CD14-positive monocyte (primary cell): ENCODE measurements at regions of chr11 and their contacts with region 1.

Region 1: GRCh38 chr11:122271137-122271536 is 155.1 kb upstream of the BLID start:
- DNase-seq: no peak
- H3K4me3 ChIP-seq: no peak overlapping the region
- H3K4me3 Mint-ChIP-seq: no peak overlapping the region
- H3K27ac ChIP-seq: no peak overlapping the region
- H3K27ac Mint-ChIP-seq: no peak overlapping the region
- H3K4me1 ChIP-seq: peaks cover 3 to 7% of the 10 kb centered on the region in 2 donors
- H3K4me1 Mint-ChIP-seq: peaks cover 17% of the 10 kb centered on the region
- H3K27me3 ChIP-seq: no peaks in the 10 kb centered on the region
- H3K27me3 Mint-ChIP-seq: peaks cover 0 to 2% (median 0%) of the 10 kb centered on the region in 3 donors
- CTCF ChIP-seq: no peak

Region 2: DNA sequence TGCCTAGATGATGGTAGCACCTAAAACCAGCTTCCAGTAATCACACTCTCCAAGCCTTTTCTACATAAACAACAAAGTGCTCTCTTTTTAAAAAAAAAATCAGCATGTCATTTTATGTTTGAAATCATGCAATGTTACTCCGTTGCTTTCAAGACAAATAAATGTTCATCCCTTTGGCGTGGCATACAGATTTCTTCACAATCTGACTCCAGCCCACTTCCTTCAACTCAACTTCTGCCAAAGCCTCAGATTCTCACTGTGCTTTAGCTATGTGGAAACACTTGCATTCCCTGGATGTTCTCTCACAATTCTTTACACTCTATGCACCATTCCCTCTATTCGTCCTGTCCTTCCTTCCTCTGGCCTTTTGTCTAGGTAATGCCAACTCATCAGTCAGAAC is 51.2 kb after region 1 on chr11:
- intact Hi-C with region 1: loop called in 1 of 2 experiments (anchors 5 kb)
- DNase-seq: peak; percentile 4 to 20 (median 18)
- H3K4me3 ChIP-seq: peak overlapping the region in 1 of 3 experiments; percentile 26
- H3K4me3 Mint-ChIP-seq: peak overlapping the region in 1 of 2 donors; percentile 53
- H3K27ac ChIP-seq: peak overlapping the region in 1 of 2 donors; percentile 27
- H3K27ac Mint-ChIP-seq: peak overlapping the region in 6 of 7 donors; percentile 0 to 69 (median 18)
- H3K4me1 ChIP-seq: peaks cover 43 to 57% of the 10 kb centered on the region in 2 donors
- H3K4me1 Mint-ChIP-seq: peaks cover 54% of the 10 kb centered on the region
- H3K27me3 ChIP-seq: no peaks in the 10 kb centered on the region
- H3K27me3 Mint-ChIP-seq: no peaks in the 10 kb centered on the region
- CTCF ChIP-seq: no peak

Region 3: DNA sequence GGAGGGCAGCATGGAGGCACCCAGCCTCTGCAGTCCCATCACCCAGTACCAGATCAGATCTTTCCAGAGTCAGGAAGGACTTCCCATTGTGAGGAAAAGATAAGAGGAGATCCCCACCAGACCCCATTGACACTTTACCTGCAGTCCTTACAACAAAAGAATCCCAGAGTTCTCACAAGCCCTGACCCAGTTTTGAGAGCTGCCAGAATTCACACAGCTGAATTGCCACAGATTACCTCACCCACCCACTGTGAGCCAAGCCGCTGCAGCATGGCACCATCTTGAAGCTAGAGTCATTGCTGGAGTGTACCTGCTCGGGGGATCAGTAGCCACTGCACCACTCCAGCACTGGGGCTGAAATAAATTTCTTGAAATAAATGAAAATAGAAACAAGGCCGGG is 292.6 kb after region 1 on chr11:
- intact Hi-C with region 1: no loop called
- DNase-seq: no peak
- H3K4me3 ChIP-seq: no peak overlapping the region
- H3K4me3 Mint-ChIP-seq: no peak overlapping the region
- H3K27ac ChIP-seq: no peak overlapping the region
- H3K27ac Mint-ChIP-seq: no peak overlapping the region
- H3K4me1 ChIP-seq: no peaks in the 10 kb centered on the region
- H3K4me1 Mint-ChIP-seq: no peaks in the 10 kb centered on the region
- H3K27me3 ChIP-seq: peaks cover 0 to 6% of the 10 kb centered on the region in 2 donors
- H3K27me3 Mint-ChIP-seq: peaks cover 3 to 16% (median 9%) of the 10 kb centered on the region in 3 donors
- CTCF ChIP-seq: no peak